ENCODE measurements at regions of chr5 and their contacts with region 1.

Region 1: DNA sequence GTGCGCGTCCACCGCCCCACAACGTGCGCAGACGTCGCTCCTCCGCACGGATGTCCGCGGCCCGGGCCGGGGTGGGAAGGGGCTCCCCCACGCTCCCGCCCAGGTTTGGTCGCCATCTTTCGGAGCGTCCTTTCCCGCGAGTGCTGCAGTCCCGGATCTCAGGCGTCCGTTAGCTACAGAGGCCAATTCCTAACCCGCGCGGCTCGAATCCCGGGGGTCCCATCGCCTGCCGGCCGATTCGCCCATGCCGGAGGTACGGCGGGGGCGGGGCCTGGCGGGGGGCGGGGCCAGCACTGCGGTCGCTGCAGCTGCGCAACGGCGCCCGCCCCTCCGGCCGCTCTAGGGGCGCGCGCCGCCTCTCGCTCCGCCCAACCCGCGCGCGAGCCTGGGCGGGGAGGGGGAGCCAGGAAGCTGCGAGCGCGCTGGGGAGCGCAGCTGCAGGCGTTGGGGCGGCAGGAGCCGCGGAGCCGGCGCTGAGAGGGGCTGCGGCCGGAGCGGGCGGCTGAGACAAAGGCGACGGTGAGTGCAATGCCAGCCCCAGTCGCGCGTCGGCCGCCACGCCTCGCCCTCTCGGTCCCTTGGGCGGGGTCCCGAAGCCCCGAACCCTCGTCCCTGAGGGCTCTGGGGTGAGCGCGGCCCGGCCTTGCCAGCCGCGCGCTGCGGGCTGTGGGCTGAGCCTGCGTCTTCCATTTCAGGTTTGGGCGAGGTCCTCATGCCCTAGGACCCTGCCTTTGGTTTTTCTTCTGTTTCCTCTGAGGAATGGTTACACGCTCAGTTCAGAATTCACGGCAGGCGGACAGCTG is at the start of gene CDC42SE2:
- DNase-seq: peak; percentile 93
- ATAC-seq: peak; percentile 87
- H3K4me3 ChIP-seq: peak within 1 kb of the TSS; percentile 76 to 100 (median 95)
- H3K4me3 Mint-ChIP-seq: peak within 1 kb of the TSS; percentile 89
- H3K27ac ChIP-seq: peak within 1 kb of the TSS; percentile 83 to 88
- H3K27ac Mint-ChIP-seq: peak within 1 kb of the TSS; percentile 98
- H3K4me1 ChIP-seq: peaks cover 33 to 41% of the 10 kb centered on the region in 2 donors
- H3K4me1 Mint-ChIP-seq: peaks cover 42% of the 10 kb centered on the region
- H3K27me3 ChIP-seq: no peaks in the 10 kb centered on the region
- H3K27me3 Mint-ChIP-seq: no peaks in the 10 kb centered on the region
- CTCF ChIP-seq: no peak
- total RNA-seq, gene CDC42SE2: 161 and 162 TPM in 2 replicates

Region 2: DNA sequence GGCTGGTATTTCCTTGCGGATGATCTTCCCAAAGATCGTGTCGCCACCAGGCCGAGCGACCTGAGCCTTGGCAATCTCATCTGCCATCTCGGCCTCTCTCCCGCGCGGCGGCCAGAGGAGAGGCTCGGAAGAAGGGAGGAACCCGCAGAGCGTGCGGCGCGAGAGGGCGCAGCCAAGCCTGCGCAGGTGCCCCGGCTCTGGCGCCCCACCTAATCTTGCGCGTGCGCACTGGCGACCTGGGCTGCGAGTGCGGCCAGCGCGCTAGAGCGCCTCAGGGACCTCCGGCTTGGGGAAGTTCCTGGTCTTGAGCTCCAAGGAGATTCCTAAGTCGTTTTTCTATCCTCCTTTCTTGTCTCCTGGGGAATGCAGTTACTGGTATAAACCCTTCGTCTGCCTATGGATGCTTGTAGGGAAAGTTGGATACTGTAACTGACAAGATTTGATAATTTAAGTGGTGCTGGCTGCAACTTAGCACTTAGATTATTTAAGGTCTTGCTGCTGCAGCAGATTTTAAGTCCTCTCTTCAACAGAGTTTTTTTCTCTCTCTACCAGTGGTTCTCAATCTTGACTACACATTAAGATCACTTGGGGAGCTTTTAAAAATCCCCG is 98.6 kb before region 1 on chr5 and contains the start of gene HINT1:
- CTCF ChIA-PET with region 1: interaction called, 7 read pairs
- POLR2A ChIA-PET with region 1: interaction called, 6 read pairs
- intact Hi-C with region 1: loop called (anchors 1 kb)
- DNase-seq: peak; percentile 96
- ATAC-seq: peak; percentile 80
- H3K4me3 ChIP-seq: peak within 1 kb of the TSS; percentile 69 to 96 (median 94)
- H3K4me3 Mint-ChIP-seq: peak within 1 kb of the TSS; percentile 90
- H3K27ac ChIP-seq: peak within 1 kb of the TSS; percentile 82 to 92
- H3K27ac Mint-ChIP-seq: peak within 1 kb of the TSS; percentile 98
- H3K4me1 ChIP-seq: peaks cover 20 to 23% of the 10 kb centered on the region in 2 donors
- H3K4me1 Mint-ChIP-seq: peaks cover 41% of the 10 kb centered on the region
- H3K27me3 ChIP-seq: no peaks in the 10 kb centered on the region
- H3K27me3 Mint-ChIP-seq: no peaks in the 10 kb centered on the region
- CTCF ChIP-seq: no peak
- total RNA-seq, gene HINT1: 180 and 206 TPM in 2 replicates

Region 3: GRCh38 chr5:131209506-131210150 is 54.2 kb before region 1 on chr5:
- CTCF ChIA-PET with region 1: interaction called, 20 read pairs
- POLR2A ChIA-PET with region 1: interaction called, 30 read pairs
- intact Hi-C with region 1: loop called (anchors 1 kb)
- DNase-seq: peak; percentile 94
- ATAC-seq: peak; percentile 87
- H3K4me3 ChIP-seq: peak overlapping the region; percentile 42 to 88 (median 59)
- H3K4me3 Mint-ChIP-seq: peak overlapping the region; percentile 85
- H3K27ac ChIP-seq: peak overlapping the region; percentile 89 to 92
- H3K27ac Mint-ChIP-seq: peak overlapping the region; percentile 98
- H3K4me1 ChIP-seq: peaks cover 37 to 53% of the 10 kb centered on the region in 2 donors
- H3K4me1 Mint-ChIP-seq: peaks cover 51% of the 10 kb centered on the region
- H3K27me3 ChIP-seq: no peaks in the 10 kb centered on the region
- H3K27me3 Mint-ChIP-seq: no peaks in the 10 kb centered on the region
- CTCF ChIP-seq: no peak

Region 4: DNA sequence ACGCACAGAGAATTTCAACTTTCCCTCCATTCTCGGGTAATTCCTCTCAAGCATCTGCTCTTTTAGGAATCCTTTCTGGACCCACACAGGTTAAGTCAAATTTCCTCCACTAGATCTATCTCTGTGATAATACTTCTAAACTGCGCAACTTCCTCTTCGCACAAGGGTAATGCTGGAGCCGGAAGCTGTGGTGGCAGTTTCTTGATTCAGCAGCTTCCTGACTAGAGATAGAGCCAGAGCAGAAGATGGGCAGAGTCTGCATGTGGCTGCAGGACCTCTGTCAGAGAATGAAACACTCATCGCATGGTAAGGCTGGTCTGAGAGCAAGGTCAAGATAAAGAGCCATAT is 11.1 kb before region 1 on chr5:
- CTCF ChIA-PET with region 1: interaction called, 60 read pairs
- POLR2A ChIA-PET with region 1: interaction called, 42 read pairs
- intact Hi-C with region 1: loop called (anchors 1 kb)
- DNase-seq: peak; percentile 89
- ATAC-seq: peak; percentile 86
- H3K4me3 ChIP-seq: peak overlapping the region; percentile 39 to 55 (median 52)
- H3K4me3 Mint-ChIP-seq: peak overlapping the region; percentile 85
- H3K27ac ChIP-seq: peak overlapping the region; percentile 90 to 92
- H3K27ac Mint-ChIP-seq: peak overlapping the region; percentile 96
- H3K4me1 ChIP-seq: peaks cover 55 to 70% of the 10 kb centered on the region in 2 donors
- H3K4me1 Mint-ChIP-seq: peaks cover 72% of the 10 kb centered on the region
- H3K27me3 ChIP-seq: no peaks in the 10 kb centered on the region
- H3K27me3 Mint-ChIP-seq: no peaks in the 10 kb centered on the region
- CTCF ChIP-seq: no peak

Region 5: GRCh38 chr5:131289738-131290137 is 25.9 kb after region 1 on chr5:
- CTCF ChIA-PET with region 1: interaction called, 16 read pairs
- POLR2A ChIA-PET with region 1: interaction called, 8 read pairs
- intact Hi-C with region 1: no loop called
- DNase-seq: no peak
- ATAC-seq: no peak
- H3K4me3 ChIP-seq: no peak overlapping the region
- H3K4me3 Mint-ChIP-seq: peak overlapping the region; percentile 77
- H3K27ac ChIP-seq: peak overlapping the region; percentile 45 to 83
- H3K27ac Mint-ChIP-seq: peak overlapping the region; percentile 73
- H3K4me1 ChIP-seq: peaks cover 37 to 41% of the 10 kb centered on the region in 2 donors
- H3K4me1 Mint-ChIP-seq: peaks cover 55% of the 10 kb centered on the region
- H3K27me3 ChIP-seq: no peaks in the 10 kb centered on the region
- H3K27me3 Mint-ChIP-seq: no peaks in the 10 kb centered on the region
- CTCF ChIP-seq: no peak

Region 6: DNA sequence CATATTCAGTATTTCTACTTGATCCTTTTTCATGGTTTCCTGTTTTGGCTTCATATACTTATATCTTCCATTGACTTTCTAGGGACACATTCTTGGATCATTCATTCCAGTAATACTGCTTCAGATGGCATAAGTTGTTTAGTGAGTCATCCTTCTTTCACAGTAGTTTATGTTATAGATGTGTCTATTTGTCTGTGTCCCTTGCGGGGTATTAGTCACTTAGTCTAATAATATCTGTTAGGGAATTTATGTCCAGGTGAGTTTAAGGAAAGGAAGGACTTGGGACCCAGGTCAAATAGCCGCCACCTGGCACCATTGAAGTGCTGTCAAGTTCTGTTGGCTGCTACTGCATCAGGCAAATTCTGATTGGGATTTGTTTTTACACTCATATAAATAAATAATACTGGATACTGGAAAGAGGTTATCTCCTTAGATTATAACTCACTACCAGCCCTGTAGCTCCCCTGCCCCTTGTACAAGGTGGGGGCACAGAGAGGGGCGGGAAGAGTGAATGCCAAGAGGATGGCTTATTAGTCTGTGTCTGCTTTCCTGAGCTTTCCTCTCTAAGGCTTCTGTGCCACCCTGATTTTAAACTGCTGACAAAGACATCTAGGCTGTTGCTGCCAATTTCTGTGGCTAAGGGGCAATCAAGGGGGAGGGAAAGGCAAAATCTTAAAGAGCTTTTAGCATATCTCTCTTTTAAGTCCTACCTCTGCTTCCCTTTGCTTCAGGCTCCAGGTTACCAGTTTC is 64.9 kb after region 1 on chr5:
- CTCF ChIA-PET with region 1: no interaction called
- POLR2A ChIA-PET with region 1: interaction called, 5 read pairs
- intact Hi-C with region 1: loop called (anchors 5 kb)
- DNase-seq: no peak
- ATAC-seq: no peak
- H3K4me3 ChIP-seq: no peak overlapping the region
- H3K4me3 Mint-ChIP-seq: no peak overlapping the region
- H3K27ac ChIP-seq: peak overlapping the region in 1 of 2 donors; percentile 63
- H3K27ac Mint-ChIP-seq: peak overlapping the region; percentile 63
- H3K4me1 ChIP-seq: peaks cover 7 to 27% of the 10 kb centered on the region in 2 donors
- H3K4me1 Mint-ChIP-seq: peaks cover 58% of the 10 kb centered on the region
- H3K27me3 ChIP-seq: no peaks in the 10 kb centered on the region
- H3K27me3 Mint-ChIP-seq: no peaks in the 10 kb centered on the region
- CTCF ChIP-seq: no peak

Region 7: GRCh38 chr5:131357739-131358561 is 94.1 kb after region 1 on chr5:
- CTCF ChIA-PET with region 1: interaction called, 10 read pairs
- POLR2A ChIA-PET with region 1: interaction called, 3 read pairs
- intact Hi-C with region 1: no loop called
- DNase-seq: peak; percentile 63
- ATAC-seq: peak; percentile 52
- H3K4me3 ChIP-seq: peak overlapping the region in 1 of 5 experiments; percentile 16
- H3K4me3 Mint-ChIP-seq: peak overlapping the region; percentile 64
- H3K27ac ChIP-seq: peak overlapping the region; percentile 67 to 80
- H3K27ac Mint-ChIP-seq: peak overlapping the region; percentile 87
- H3K4me1 ChIP-seq: peaks cover 27 to 32% of the 10 kb centered on the region in 2 donors
- H3K4me1 Mint-ChIP-seq: peaks cover 45% of the 10 kb centered on the region
- H3K27me3 ChIP-seq: no peaks in the 10 kb centered on the region
- H3K27me3 Mint-ChIP-seq: no peaks in the 10 kb centered on the region
- CTCF ChIP-seq: no peak

Region 8: DNA sequence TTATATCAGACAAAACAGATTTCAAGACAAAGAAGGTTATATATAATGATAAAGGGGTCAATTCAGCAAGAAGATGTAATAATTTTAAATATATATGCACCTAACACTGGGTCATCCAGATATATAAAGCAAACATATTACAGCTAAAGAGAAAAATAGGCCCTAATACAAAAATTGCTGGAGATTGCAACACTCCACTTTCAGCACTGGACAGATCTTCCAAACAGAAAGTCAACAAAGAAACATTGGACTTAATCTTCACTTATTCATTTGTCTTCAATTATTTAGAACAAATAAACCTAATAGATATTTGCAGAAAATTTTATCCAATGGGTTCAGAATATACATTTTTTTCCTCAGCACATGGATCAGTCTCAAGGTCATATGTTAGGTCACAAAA is 635.8 kb after region 1 on chr5:
- CTCF ChIA-PET with region 1: no interaction called
- POLR2A ChIA-PET with region 1: no interaction called
- intact Hi-C with region 1: no loop called
- DNase-seq: no peak
- ATAC-seq: no peak
- H3K4me3 ChIP-seq: no peak overlapping the region
- H3K4me3 Mint-ChIP-seq: no peak overlapping the region
- H3K27ac ChIP-seq: no peak overlapping the region
- H3K27ac Mint-ChIP-seq: no peak overlapping the region
- H3K4me1 ChIP-seq: no peaks in the 10 kb centered on the region
- H3K4me1 Mint-ChIP-seq: peaks cover 2% of the 10 kb centered on the region
- H3K27me3 ChIP-seq: peaks cover 0 to 12% (median 0%) of the 10 kb centered on the region in 4 experiments
- H3K27me3 Mint-ChIP-seq: peaks cover 34% of the 10 kb centered on the region
- CTCF ChIP-seq: no peak